ENCODE measurements at regions of chr14 and their contacts with region 1.

Region 1: GRCh38 chr14:47040550-47040949 is 389.0 kb upstream of the RPL10L start:
- DNase-seq: peak in 1 of 2 experiments; percentile 34
- H3K4me3 ChIP-seq: no peak overlapping the region
- H3K4me3 Mint-ChIP-seq: no peak overlapping the region
- H3K27ac Mint-ChIP-seq: no peak overlapping the region
- H3K4me1 ChIP-seq: no peaks in the 10 kb centered on the region
- H3K4me1 Mint-ChIP-seq: peaks cover 6% of the 10 kb centered on the region
- H3K27me3 ChIP-seq: no peaks in the 10 kb centered on the region
- H3K27me3 Mint-ChIP-seq: no peaks in the 10 kb centered on the region
- CTCF ChIP-seq: peak; percentile 14 to 42

Region 2: GRCh38 chr14:46250113-46250703 is 790.3 kb before region 1 on chr14:
- CTCF ChIA-PET with region 1: no interaction called
- POLR2A ChIA-PET with region 1: no interaction called
- intact Hi-C with region 1: loop called (anchors 2 kb)
- DNase-seq: peak in 1 of 2 experiments; percentile 17
- H3K4me3 ChIP-seq: no peak overlapping the region
- H3K4me3 Mint-ChIP-seq: no peak overlapping the region
- H3K27ac Mint-ChIP-seq: no peak overlapping the region
- H3K4me1 ChIP-seq: no peaks in the 10 kb centered on the region
- H3K4me1 Mint-ChIP-seq: no peaks in the 10 kb centered on the region
- H3K27me3 ChIP-seq: no peaks in the 10 kb centered on the region
- H3K27me3 Mint-ChIP-seq: peaks cover 2% of the 10 kb centered on the region
- CTCF ChIP-seq: peak; percentile 46 to 55

Region 3: GRCh38 chr14:46940611-46941010 is 99.9 kb before region 1 on chr14:
- CTCF ChIA-PET with region 1: no interaction called
- POLR2A ChIA-PET with region 1: no interaction called
- intact Hi-C with region 1: no loop called
- DNase-seq: no peak
- H3K4me3 ChIP-seq: no peak overlapping the region
- H3K4me3 Mint-ChIP-seq: no peak overlapping the region
- H3K27ac Mint-ChIP-seq: no peak overlapping the region
- H3K4me1 ChIP-seq: no peaks in the 10 kb centered on the region
- H3K4me1 Mint-ChIP-seq: no peaks in the 10 kb centered on the region
- H3K27me3 ChIP-seq: no peaks in the 10 kb centered on the region
- H3K27me3 Mint-ChIP-seq: no peaks in the 10 kb centered on the region
- CTCF ChIP-seq: no peak

Region 4: DNA sequence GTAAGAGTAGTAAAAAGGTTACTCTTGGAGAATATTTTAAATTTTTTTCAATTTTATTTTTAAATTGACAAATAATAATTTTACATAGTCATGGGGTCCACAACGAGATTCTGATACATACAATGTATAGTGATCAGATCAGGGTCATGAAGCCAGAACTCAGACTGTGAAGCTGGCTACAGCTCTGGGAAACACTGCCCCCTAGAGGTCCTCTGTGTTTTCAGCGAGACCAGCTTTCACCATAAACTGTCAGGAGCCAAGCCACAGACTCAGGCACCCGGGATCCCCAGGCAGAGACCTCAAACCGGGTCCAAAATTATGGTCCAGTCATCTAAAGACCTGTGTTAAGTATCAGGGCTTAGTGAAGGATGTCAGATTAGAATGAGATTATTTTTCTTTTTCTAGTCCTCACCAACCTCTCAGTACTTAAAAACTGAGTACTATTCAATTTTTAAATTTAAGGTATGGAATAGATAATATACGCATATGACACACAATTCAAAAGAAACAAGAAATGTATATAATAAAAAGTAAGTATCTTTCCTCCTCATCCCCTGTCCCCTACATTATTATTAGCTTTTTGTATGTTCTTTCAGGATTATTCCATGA is 237.8 kb after region 1 on chr14:
- CTCF ChIA-PET with region 1: no interaction called
- POLR2A ChIA-PET with region 1: no interaction called
- intact Hi-C with region 1: loop called (anchors 1 kb)
- DNase-seq: peak; percentile 47 to 70
- H3K4me3 ChIP-seq: no peak overlapping the region
- H3K4me3 Mint-ChIP-seq: no peak overlapping the region
- H3K27ac Mint-ChIP-seq: no peak overlapping the region
- H3K4me1 ChIP-seq: no peaks in the 10 kb centered on the region
- H3K4me1 Mint-ChIP-seq: no peaks in the 10 kb centered on the region
- H3K27me3 ChIP-seq: no peaks in the 10 kb centered on the region
- H3K27me3 Mint-ChIP-seq: peaks cover 3% of the 10 kb centered on the region
- CTCF ChIP-seq: peak; percentile 70 to 82

Measured in Caco-2 (cell line).